CD8-positive, alpha-beta T cell (primary cell): ENCODE measurements at regions of chr1 and their contacts with region 1.

Region 1: DNA sequence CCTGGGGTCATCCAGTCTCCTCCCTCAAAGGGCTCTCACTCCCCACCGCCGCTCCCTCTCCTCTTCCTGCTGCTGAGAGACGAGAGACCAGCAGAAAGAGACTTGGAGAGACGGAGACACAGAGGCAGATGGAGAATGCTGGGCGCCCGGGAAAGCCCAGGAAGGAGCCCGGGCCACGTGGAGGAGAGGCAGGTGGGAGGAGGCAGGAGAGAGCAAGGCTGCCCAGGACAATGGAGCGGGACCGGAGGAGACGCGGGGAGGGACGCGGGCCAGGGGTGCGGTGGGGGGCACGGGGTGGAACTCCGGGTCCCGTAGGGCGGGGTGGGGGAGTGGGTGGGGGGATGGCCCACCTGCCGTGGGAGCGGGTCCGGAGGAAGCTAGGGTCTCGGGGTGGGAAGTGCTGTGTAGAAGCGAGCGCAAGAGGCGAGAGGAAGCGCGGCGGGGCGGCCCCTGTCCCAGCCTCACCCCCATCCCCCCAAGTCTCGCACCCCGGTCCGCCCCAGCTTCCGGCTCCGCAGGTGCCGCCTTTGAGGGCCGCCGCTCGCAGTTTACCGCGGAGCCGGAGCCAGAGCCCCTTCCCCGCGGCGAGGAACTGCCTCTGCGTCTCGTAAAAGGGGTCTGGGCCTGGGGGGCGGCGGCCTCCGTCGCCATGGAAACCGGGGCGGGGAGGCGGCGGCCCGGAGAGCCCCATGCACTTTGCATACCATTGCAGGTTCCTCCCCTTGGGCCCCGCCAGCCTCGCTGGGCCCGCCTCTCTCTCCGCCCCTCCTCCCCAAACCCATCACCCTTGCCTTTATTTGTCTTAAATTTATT is 11.7 kb upstream of the EPHA2 start:
- DNase-seq: peak; percentile 32 to 84 (median 68)
- ATAC-seq: peak; percentile 85
- H3K4me3 ChIP-seq: peak overlapping the region; percentile 30 to 43
- H3K4me3 Mint-ChIP-seq: peak overlapping the region; percentile 65
- H3K27ac ChIP-seq: no peak overlapping the region
- H3K27ac Mint-ChIP-seq: no peak overlapping the region
- H3K4me1 ChIP-seq: peaks cover 49% of the 10 kb centered on the region
- H3K4me1 Mint-ChIP-seq: peaks cover 45% of the 10 kb centered on the region
- H3K27me3 ChIP-seq: peaks cover 0 to 12% of the 10 kb centered on the region in 2 experiments
- H3K27me3 Mint-ChIP-seq: peaks cover 8% of the 10 kb centered on the region
- CTCF ChIP-seq: no peak

Region 2: GRCh38 chr1:15985611-15986297 is 181.8 kb before region 1 on chr1:
- CTCF ChIA-PET with region 1: no interaction called
- POLR2A ChIA-PET with region 1: no interaction called
- intact Hi-C with region 1: no loop called
- DNase-seq: no peak
- ATAC-seq: no peak
- H3K4me3 ChIP-seq: no peak overlapping the region
- H3K4me3 Mint-ChIP-seq: no peak overlapping the region
- H3K27ac ChIP-seq: no peak overlapping the region
- H3K27ac Mint-ChIP-seq: no peak overlapping the region
- H3K4me1 ChIP-seq: no peaks in the 10 kb centered on the region
- H3K4me1 Mint-ChIP-seq: no peaks in the 10 kb centered on the region
- H3K27me3 ChIP-seq: no peaks in the 10 kb centered on the region
- H3K27me3 Mint-ChIP-seq: peaks cover 2% of the 10 kb centered on the region
- CTCF ChIP-seq: no peak

Region 3: GRCh38 chr1:16122916-16123315 is 44.6 kb before region 1 on chr1:
- CTCF ChIA-PET with region 1: no interaction called
- POLR2A ChIA-PET with region 1: no interaction called
- intact Hi-C with region 1: loop called in 1 of 2 experiments (anchors 2 kb)
- DNase-seq: peak in 7 of 9 experiments; percentile 5 to 88 (median 55)
- ATAC-seq: peak; percentile 82
- H3K4me3 ChIP-seq: no peak overlapping the region
- H3K4me3 Mint-ChIP-seq: peak overlapping the region; percentile 31
- H3K27ac ChIP-seq: no peak overlapping the region
- H3K27ac Mint-ChIP-seq: peak overlapping the region; percentile 6
- H3K4me1 ChIP-seq: peaks cover 16% of the 10 kb centered on the region
- H3K4me1 Mint-ChIP-seq: peaks cover 14% of the 10 kb centered on the region
- H3K27me3 ChIP-seq: no peaks in the 10 kb centered on the region
- H3K27me3 Mint-ChIP-seq: no peaks in the 10 kb centered on the region
- CTCF ChIP-seq: no peak